ENCODE measurements at regions of chr5 and their contacts with region 1.

Region 1: DNA sequence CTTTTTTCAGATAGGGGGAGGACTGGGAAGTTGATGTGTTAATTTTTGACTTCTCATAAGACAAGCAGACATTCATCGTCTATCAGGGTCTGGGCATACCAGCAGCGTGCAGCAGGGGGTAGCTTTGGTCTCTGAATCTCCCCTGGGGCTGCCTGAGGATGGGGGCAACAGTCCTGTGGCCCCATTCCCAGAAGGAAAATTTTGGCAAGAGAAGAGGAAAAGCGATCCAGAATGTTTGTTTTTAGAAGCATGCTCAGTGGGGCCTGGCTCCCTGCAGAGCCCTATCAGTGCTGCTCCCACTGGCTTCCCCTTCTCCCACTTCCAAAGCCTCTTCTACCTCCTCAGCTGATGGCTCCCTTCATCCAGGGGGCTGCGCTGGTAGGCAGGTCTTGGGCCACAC is 194.8 kb upstream of the IL12B start:
- DNase-seq: no peak
- ATAC-seq: peak in 2 of 4 donors; percentile 32 to 66
- H3K4me3 ChIP-seq: no peak overlapping the region
- H3K27ac ChIP-seq: no peak overlapping the region
- H3K4me1 ChIP-seq: peaks cover 0 to 10% (median 5%) of the 10 kb centered on the region in 12 donors
- H3K27me3 ChIP-seq: no peaks in the 10 kb centered on the region
- CTCF ChIP-seq: peak in 5 of 12 donors; percentile 11 to 43 (median 22)
- POLR2A ChIP-seq: no peak

Region 2: GRCh38 chr5:159486836-159487235 is 38.3 kb before region 1 on chr5:
- intact Hi-C with region 1: no loop called
- DNase-seq: no peak
- ATAC-seq: no peak
- H3K4me3 ChIP-seq: no peak overlapping the region
- H3K27ac ChIP-seq: no peak overlapping the region
- H3K4me1 ChIP-seq: no peaks in the 10 kb centered on the region
- H3K27me3 ChIP-seq: no peaks in the 10 kb centered on the region
- CTCF ChIP-seq: no peak
- POLR2A ChIP-seq: no peak

Region 3: DNA sequence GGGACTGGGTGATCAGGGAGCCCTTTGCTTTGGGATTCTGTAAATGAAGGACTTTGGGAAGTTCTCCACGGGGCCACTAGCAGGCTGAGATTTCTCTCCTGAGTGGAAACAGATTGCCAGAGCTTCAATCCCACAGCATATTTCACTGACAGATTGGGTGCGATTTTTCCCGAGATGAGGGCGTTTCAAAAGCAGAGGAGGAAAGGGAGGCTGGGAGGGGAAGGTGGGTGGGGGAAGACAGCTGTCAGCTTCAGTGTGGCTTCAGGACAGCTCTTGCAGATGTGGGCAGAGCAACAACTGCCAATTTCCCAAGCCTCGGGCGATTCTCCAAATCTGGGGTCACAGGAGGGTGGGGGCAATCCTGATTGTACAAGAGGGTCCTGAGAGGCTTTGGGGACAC is 132.7 kb after region 1 on chr5:
- intact Hi-C with region 1: loop called in 1 of 10 experiments (anchors 5 kb)
- DNase-seq: no peak
- ATAC-seq: no peak
- H3K4me3 ChIP-seq: no peak overlapping the region
- H3K27ac ChIP-seq: no peak overlapping the region
- H3K4me1 ChIP-seq: peaks cover 0 to 12% (median 4%) of the 10 kb centered on the region in 12 donors
- H3K27me3 ChIP-seq: no peaks in the 10 kb centered on the region
- CTCF ChIP-seq: no peak
- POLR2A ChIP-seq: no peak

Region 4: DNA sequence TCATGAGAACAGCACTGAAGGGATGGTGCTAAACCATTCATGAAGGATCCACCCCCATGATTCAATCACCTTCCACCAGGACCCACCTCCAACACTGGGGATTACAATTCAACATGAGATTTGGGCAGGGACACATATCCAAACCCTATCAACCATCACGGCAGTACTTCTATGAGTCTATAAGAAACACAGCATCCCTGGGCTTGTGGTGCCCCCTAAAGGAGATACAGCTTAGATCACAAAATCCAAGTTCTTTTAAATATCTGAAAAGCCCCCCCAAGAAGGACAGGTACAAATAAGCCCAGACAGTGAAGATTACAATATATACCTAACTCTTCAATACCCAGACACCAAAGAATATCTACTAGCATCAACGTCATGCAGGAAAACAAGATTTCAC is 157.5 kb after region 1 on chr5:
- intact Hi-C with region 1: loop called in 1 of 10 experiments (anchors 10 kb)
- DNase-seq: no peak
- ATAC-seq: peak in 2 of 4 donors; percentile 34 to 52
- H3K4me3 ChIP-seq: no peak overlapping the region
- H3K27ac ChIP-seq: no peak overlapping the region
- H3K4me1 ChIP-seq: no peaks in the 10 kb centered on the region
- H3K27me3 ChIP-seq: no peaks in the 10 kb centered on the region
- CTCF ChIP-seq: peak in 4 of 12 donors; percentile 7 to 22 (median 16)
- POLR2A ChIP-seq: no peak

Measured in heart left ventricle (tissue), 16 donors.